ENCODE measurements at regions of chr4 and their contacts with region 1.

Region 1: DNA sequence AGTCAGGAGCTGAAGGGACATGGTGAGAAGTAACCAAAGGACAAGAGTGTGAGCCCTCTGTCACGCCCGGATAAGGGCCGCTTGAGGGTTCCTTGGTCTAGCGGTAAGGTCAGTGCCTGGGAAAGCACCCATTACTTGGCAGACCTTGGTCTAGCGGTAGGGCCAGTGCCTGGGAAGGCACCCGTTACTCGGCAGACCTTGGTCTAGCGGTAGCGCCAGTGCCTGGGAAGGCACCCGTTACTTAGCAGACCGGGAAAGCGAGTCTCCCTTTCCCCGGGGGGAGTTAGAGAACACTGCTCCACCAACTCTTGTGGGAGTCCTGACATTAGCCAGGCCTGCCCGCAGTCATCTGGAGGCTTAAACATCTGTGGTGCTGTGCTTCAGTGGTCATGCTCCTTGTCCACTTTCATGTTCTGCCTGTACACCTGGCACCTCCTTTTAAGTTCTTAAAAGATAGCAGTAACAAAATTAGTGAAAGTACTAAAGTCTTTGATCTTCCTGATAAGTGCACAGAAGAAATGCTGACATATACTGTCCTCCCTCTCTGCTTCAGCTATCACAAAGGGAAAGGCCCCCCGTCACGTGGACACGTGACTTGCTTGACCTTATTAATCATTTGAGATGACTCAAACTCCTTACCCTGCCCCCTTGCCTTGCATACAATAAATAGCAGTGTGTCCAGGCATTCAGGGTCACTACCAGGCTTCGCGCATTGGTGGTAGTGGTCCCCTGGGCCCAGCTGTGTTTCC is 9.3 kb upstream of the SEC24B start:
- DNase-seq: no peak
- H3K4me3 Mint-ChIP-seq: no peak overlapping the region
- H3K27ac Mint-ChIP-seq: no peak overlapping the region
- H3K4me1 Mint-ChIP-seq: peaks cover 9% of the 10 kb centered on the region
- H3K27me3 Mint-ChIP-seq: peaks cover 9% of the 10 kb centered on the region

Region 2: DNA sequence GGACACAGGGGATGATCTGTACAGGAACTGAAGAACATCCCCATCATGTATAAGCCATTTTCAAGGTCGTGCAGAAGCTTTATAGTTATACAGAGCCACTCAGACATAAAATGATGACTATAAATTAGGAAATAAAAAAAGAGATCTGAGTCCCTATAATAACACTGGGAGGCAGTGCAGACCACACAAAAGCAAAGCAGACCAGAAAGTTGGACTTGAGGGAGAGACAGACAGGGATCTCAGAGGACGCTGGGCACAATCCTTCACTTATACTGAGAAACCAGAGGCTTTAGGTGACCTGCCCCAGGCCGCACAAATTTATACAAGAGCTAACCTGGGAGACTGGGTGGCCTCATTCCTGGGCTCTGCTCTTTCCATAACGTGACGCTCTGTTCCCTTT is 1364.1 kb before region 1 on chr4:
- intact Hi-C with region 1: no loop called
- DNase-seq: no peak
- H3K4me3 Mint-ChIP-seq: no peak overlapping the region
- H3K27ac Mint-ChIP-seq: peak overlapping the region; percentile 32
- H3K4me1 Mint-ChIP-seq: peaks cover 57% of the 10 kb centered on the region
- H3K27me3 Mint-ChIP-seq: no peaks in the 10 kb centered on the region

Region 3: GRCh38 chr4:109803924-109804571 is 379.8 kb after region 1 on chr4:
- intact Hi-C with region 1: loop called (anchors 1 kb)
- DNase-seq: no peak
- H3K4me3 Mint-ChIP-seq: no peak overlapping the region
- H3K27ac Mint-ChIP-seq: no peak overlapping the region
- H3K4me1 Mint-ChIP-seq: no peaks in the 10 kb centered on the region
- H3K27me3 Mint-ChIP-seq: no peaks in the 10 kb centered on the region

Region 4: DNA sequence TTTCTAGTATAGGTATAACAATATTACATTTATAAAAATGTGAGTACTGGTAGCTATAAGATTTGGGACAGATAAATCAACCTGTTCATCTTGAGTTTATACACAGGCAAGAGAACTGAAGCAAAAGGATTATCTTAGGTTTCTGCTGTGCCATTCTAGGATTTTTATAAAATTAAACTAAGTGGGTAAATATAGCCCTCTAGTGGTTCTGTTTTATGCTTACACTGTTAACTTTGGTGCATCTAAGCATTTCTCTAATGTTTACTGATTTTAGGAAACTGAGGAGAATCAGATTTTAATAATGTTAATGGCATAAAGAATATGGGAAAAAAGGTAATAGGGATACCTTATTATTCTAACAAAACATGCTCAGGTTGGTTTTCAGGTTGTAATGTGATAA is 402.5 kb after region 1 on chr4:
- intact Hi-C with region 1: loop called (anchors 1 kb)
- DNase-seq: no peak
- H3K4me3 Mint-ChIP-seq: no peak overlapping the region
- H3K27ac Mint-ChIP-seq: no peak overlapping the region
- H3K4me1 Mint-ChIP-seq: peaks cover 10% of the 10 kb centered on the region
- H3K27me3 Mint-ChIP-seq: no peaks in the 10 kb centered on the region

Region 5: GRCh38 chr4:109977854-109978501 is 553.7 kb after region 1 on chr4:
- intact Hi-C with region 1: loop called (anchors 1 kb)
- DNase-seq: no peak
- H3K4me3 Mint-ChIP-seq: no peak overlapping the region
- H3K27ac Mint-ChIP-seq: no peak overlapping the region
- H3K4me1 Mint-ChIP-seq: peaks cover 5% of the 10 kb centered on the region
- H3K27me3 Mint-ChIP-seq: peaks cover 32% of the 10 kb centered on the region

Region 6: GRCh38 chr4:109998867-109999584 is 574.8 kb after region 1 on chr4:
- intact Hi-C with region 1: loop called (anchors 5 kb)
- DNase-seq: peak; percentile 14
- H3K4me3 Mint-ChIP-seq: no peak overlapping the region
- H3K27ac Mint-ChIP-seq: no peak overlapping the region
- H3K4me1 Mint-ChIP-seq: peaks cover 18% of the 10 kb centered on the region
- H3K27me3 Mint-ChIP-seq: peaks cover 4% of the 10 kb centered on the region

Measured in activated T-helper 1 cell treated with anti-CD3 and anti-CD28 coated beads, Interleukin-12 subunit alpha, Interleukin-12 subunit beta, Interleukin-2, Interleukin-4 antibody, amounts not matched to agents 30 ng/mL and 10 ng/mL and 1 ng/mL, durations not matched to agents 14 hours and 24 hours and 36 hours (primary cell).